Activated CD4-positive, alpha-beta memory T cell treated with anti-CD3 and anti-CD28 coated beads, Interleukin-2, amount 10 ng/mL, durations not matched to agents 7 days and 5 days (primary cell): ENCODE measurements at regions of chr2 and their contacts with region 1.

Region 1: GRCh38 chr2:176454893-176455811 is 185.9 kb downstream of the MTX2 start:
- DNase-seq: peak; percentile 79
- H3K4me3 Mint-ChIP-seq: no peak overlapping the region
- H3K27ac Mint-ChIP-seq: no peak overlapping the region
- H3K4me1 Mint-ChIP-seq: no peaks in the 10 kb centered on the region
- H3K27me3 Mint-ChIP-seq: peaks cover 23% of the 10 kb centered on the region

Region 2: DNA sequence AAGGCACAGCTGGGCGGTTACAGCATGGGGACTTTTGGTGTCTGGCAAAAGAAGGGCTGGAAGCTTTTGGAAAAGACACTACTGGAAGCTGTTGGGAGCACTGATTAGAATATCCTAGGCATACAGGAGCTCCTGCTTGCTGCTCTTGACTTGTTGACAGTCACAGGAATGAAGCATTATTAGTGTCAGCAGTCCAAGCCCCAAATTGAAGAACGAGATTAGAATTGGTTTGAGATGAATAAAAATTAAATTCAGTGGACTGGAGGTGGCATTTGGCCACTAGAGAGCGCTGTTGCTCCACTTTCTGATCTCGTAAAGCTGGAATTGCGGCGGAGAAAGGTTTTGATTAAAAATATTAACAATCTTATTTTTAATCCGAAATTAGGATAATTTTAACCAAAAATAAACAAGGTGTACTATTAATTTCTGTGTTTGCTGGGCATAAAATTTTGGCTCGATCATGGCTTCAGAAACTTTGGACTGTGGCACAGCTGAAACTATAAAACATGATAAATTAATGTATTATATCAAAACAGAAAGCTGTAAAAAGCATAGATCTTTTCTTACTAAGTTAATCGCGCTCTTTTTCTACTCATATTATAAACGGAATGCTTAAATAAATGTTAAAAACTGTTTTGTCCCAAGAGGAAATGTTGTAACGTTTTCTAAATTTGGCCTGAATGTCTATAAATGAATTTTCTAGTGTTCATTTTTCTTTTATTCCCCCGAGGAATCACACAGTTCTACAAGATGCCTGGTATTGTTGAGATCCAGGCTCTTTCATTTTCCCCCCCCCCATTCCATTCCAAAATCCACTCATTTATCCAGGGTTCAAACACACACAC is 328.0 kb before region 1 on chr2:
- CTCF ChIA-PET with region 1: interaction called, 43 read pairs
- POLR2A ChIA-PET with region 1: no interaction called
- DNase-seq: peak; percentile 61
- H3K4me3 Mint-ChIP-seq: no peak overlapping the region
- H3K27ac Mint-ChIP-seq: no peak overlapping the region
- H3K4me1 Mint-ChIP-seq: peaks cover 16% of the 10 kb centered on the region
- H3K27me3 Mint-ChIP-seq: peaks cover 74% of the 10 kb centered on the region

Region 3: DNA sequence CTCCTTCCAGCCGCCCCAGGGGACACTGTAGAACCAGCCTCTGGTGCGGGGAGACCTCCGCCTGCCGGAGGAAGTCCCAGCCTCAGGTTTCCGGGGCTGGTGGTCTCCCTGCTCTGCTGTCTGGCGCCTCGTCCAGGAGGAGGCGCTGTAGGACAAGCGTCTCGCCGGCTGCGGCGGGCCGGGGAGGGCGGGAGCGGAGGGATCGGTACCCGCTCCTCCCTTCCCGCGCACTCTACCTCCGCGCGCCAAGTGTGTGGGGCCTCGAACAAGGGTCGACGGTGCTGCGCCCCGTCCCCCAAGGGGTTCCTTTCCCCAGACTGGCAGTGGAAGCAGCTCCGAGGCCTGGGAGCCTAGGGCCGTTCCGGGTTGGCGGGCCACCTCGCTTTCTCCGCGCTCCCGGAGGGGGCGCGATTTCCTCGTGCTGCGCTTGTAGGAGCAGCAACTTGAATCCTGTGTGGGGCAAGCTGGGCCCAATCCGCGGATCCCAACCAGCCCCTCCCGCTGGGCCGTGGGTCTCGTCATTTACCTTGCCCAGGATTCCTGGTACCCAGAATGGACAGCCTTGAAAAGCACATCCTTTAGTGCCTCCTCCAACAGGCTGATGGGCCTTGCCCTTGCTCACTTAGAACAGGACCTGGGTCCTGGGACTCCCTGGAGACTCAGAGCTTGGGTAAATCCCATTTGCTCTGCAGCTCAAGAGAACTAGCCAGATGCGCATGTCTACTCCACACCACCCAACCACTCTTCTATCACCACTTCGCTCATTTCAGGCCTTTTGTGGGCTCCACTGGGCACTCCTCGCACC is 314.4 kb before region 1 on chr2:
- CTCF ChIA-PET with region 1: interaction called, 64 read pairs
- POLR2A ChIA-PET with region 1: no interaction called
- DNase-seq: peak; percentile 70
- H3K4me3 Mint-ChIP-seq: peak overlapping the region; percentile 9
- H3K27ac Mint-ChIP-seq: no peak overlapping the region
- H3K4me1 Mint-ChIP-seq: peaks cover 22% of the 10 kb centered on the region
- H3K27me3 Mint-ChIP-seq: peaks cover 74% of the 10 kb centered on the region

Region 4: GRCh38 chr2:176432434-176432833 is 22.7 kb before region 1 on chr2:
- CTCF ChIA-PET with region 1: interaction called, 12 read pairs
- POLR2A ChIA-PET with region 1: no interaction called
- DNase-seq: no peak
- H3K4me3 Mint-ChIP-seq: no peak overlapping the region
- H3K27ac Mint-ChIP-seq: no peak overlapping the region
- H3K4me1 Mint-ChIP-seq: no peaks in the 10 kb centered on the region
- H3K27me3 Mint-ChIP-seq: peaks cover 10% of the 10 kb centered on the region

Region 5: DNA sequence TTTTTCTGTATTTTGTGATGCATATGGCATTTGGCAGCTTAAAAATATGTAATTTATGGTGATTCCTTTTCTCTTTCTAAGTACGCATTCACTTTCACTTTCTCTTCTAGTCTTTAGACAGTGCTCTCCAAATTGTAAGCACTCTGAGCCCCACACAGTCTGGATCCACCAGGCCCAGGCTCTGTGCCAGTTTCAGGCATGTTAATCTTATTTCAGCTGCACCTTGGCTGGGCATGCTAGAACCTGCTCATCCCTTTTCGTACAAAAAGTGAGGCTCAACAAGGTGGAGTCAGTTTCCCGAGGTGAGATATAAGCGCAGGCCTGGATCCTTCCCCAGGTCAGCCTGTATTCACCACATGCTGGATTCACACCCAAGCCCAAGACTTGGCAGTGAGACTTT is 18.0 kb after region 1 on chr2:
- CTCF ChIA-PET with region 1: interaction called, 15 read pairs
- POLR2A ChIA-PET with region 1: no interaction called
- DNase-seq: no peak
- H3K4me3 Mint-ChIP-seq: peak overlapping the region; percentile 44
- H3K27ac Mint-ChIP-seq: no peak overlapping the region
- H3K4me1 Mint-ChIP-seq: peaks cover 9% of the 10 kb centered on the region
- H3K27me3 Mint-ChIP-seq: peaks cover 8% of the 10 kb centered on the region

Region 6: GRCh38 chr2:176554101-176555048 is 99.2 kb after region 1 on chr2:
- CTCF ChIA-PET with region 1: interaction called, 18 read pairs
- POLR2A ChIA-PET with region 1: no interaction called
- DNase-seq: peak; percentile 23
- H3K4me3 Mint-ChIP-seq: peak overlapping the region; percentile 48
- H3K27ac Mint-ChIP-seq: no peak overlapping the region
- H3K4me1 Mint-ChIP-seq: peaks cover 12% of the 10 kb centered on the region
- H3K27me3 Mint-ChIP-seq: peaks cover 47% of the 10 kb centered on the region

Region 7: GRCh38 chr2:176613323-176613987 is 158.3 kb after region 1 on chr2:
- CTCF ChIA-PET with region 1: no interaction called
- POLR2A ChIA-PET with region 1: no interaction called
- DNase-seq: no peak
- H3K4me3 Mint-ChIP-seq: no peak overlapping the region
- H3K27ac Mint-ChIP-seq: no peak overlapping the region
- H3K4me1 Mint-ChIP-seq: no peaks in the 10 kb centered on the region
- H3K27me3 Mint-ChIP-seq: peaks cover 21% of the 10 kb centered on the region

Region 8: GRCh38 chr2:176638167-176639015 is 183.2 kb after region 1 on chr2:
- CTCF ChIA-PET with region 1: interaction called, 22 read pairs
- POLR2A ChIA-PET with region 1: no interaction called
- DNase-seq: peak; percentile 61
- H3K4me3 Mint-ChIP-seq: peak overlapping the region; percentile 51
- H3K27ac Mint-ChIP-seq: no peak overlapping the region
- H3K4me1 Mint-ChIP-seq: peaks cover 1% of the 10 kb centered on the region
- H3K27me3 Mint-ChIP-seq: peaks cover 63% of the 10 kb centered on the region